ENCODE measurements at regions of chr3 and their contacts with region 1.

Region 1: DNA sequence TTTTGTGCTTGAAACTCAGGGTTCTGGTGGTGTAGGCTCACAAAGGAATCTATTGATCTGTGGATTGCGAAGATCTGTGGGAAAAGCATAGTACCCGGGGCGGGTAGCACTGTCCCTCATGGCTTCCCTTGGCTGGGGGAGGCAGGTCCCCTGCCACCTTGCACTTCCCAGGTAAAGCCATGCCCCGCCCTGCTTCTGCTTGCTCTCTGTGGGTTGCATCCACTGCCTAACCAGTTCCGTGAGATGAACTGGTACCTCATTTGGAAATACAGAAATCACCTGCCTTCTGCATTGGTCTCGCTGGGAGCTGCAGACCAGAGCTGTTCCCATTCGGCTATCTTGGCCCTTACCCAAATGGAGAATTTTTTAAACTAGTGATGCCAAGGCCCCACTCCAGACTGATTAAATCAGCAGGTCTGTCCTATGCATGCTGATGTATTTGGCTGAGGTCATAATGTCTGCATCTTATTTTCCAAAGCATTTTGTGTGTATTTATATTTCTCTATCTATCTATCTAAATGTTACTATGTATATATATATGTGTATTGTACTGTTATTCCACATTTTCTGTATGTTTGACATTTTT is 65.5 kb upstream of the SLC7A14 start:
- DNase-seq: no peak
- H3K4me3 ChIP-seq: no peak overlapping the region
- H3K27ac ChIP-seq: peak overlapping the region in 4 of 59 donors; percentile 5 to 39 (median 24)
- H3K27me3 ChIP-seq: no peaks in the 10 kb centered on the region
- CTCF ChIP-seq: no peak

Region 2: GRCh38 chr3:170689893-170690660 is 38.7 kb after region 1 on chr3:
- intact Hi-C with region 1: loop called in 1 of 2 experiments (anchors 5 kb)
- DNase-seq: peak; percentile 65 to 83 (median 74)
- H3K4me3 ChIP-seq: no peak overlapping the region
- H3K27ac ChIP-seq: peak overlapping the region in 17 of 59 donors; percentile 4 to 64 (median 29)
- H3K27me3 ChIP-seq: no peaks in the 10 kb centered on the region
- CTCF ChIP-seq: peak; percentile 49 to 92 (median 79)